Transverse colon (tissue), 4 donors: ENCODE measurements at regions of chr5 and their contacts with region 1.

Region 1: DNA sequence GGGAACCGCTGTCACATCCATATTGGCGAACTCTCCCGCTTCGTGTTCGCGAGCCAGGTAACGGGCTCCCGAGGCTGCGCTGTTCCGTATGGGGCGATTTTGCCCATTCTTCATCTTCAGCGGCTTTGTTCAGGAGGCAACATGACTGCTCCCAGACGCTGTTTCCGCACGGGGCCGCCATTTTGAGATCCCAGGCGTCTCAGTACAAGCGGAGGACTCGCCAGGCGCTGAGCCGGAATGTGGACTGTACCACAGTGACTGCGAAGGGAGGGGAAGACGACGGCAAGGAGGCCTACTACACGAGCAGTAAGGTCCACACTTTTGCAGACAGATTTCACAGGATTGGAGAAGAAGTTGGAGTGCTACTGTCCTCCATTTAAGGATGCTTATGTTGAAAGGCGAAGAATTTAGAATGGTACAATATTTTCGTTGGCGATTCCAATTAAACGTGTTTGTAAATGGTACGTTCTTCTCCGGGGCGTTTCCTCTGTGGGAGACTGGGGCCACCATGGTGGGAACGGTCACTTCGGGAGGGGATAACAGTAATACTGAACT is 41.6 kb upstream of the ZNF300 start:
- DNase-seq: peak; percentile 53
- H3K4me3 ChIP-seq: peak overlapping the region; percentile 35 to 50 (median 41)
- H3K27ac ChIP-seq: peak overlapping the region; percentile 66 to 83 (median 78)
- H3K4me1 ChIP-seq: no peaks in the 10 kb centered on the region
- H3K27me3 ChIP-seq: no peaks in the 10 kb centered on the region
- CTCF ChIP-seq: no peak
- EP300 ChIP-seq: no peak
- POLR2A ChIP-seq: no peak

Region 2: DNA sequence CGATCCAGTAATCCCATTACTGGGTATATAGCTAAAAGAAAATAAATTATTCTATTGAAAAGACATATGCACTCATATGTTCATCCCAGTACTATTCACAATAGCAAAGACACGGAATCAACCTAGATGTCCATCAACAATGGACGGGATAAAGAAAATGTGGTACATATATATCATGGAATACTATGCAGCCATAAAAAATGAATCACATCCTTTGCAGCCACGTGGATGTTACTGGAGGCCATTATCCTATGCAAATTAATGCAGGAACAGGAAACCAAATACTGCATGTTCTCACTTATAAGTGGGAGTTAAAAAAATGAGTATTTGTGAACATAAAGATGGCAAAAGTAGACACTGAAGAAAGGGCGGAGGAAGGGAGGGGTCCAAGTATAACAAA is 116.7 kb before region 1 on chr5:
- in situ Hi-C with region 1: no loop called
- intact Hi-C with region 1: no loop called
- DNase-seq: no peak
- H3K4me3 ChIP-seq: no peak overlapping the region
- H3K27ac ChIP-seq: no peak overlapping the region
- H3K4me1 ChIP-seq: no peaks in the 10 kb centered on the region
- H3K27me3 ChIP-seq: no peaks in the 10 kb centered on the region
- CTCF ChIP-seq: no peak
- EP300 ChIP-seq: no peak
- POLR2A ChIP-seq: no peak

Region 3: DNA sequence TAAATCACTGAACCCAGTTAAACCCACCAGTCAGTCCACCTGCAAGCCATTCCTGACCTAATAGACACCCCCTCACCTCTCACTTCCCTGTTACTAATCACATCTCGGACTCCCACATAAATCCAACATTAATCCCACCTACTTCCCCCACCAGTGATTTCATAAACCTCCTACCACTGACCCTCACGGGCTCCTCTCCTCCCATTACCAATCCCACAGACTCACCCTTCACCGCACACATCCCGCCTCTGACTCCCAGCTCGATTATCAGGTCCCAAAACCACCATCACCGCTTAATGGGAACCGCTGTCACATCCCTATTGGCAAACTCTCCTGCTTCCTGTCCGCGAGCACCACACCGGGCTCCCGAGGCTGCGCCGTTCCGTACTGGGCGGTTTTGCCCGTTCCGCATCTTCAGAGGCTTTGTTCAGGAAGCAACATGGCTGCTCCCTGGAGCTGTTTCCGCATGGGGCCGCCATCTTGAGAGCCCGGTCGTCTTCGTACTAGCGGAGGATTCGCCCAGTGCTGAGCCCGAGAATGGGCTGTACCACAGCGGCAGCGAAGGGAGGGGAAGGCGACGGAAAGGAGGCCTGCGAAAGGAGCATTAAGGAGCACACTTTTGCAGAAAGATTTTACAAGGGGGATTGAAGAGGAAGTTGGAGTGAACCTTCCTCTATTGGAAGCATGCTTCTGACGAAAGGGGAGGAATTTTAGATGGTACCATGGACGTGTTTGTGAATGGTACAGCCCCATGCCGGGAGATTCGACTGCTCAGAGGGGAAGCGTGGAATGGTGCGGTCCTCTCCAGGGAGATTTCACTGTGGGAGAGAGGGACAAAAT is 41.7 kb before region 1 on chr5 and contains the start of gene ZNF300:
- in situ Hi-C with region 1: no loop called
- intact Hi-C with region 1: loop called (anchors 1 kb)
- DNase-seq: peak; percentile 79
- H3K4me3 ChIP-seq: peak within 1 kb of the TSS; percentile 31 to 52 (median 40)
- H3K27ac ChIP-seq: peak within 1 kb of the TSS; percentile 11 to 68 (median 58)
- H3K4me1 ChIP-seq: peaks cover 0 to 5% (median 0%) of the 10 kb centered on the region in 4 donors
- H3K27me3 ChIP-seq: no peaks in the 10 kb centered on the region
- CTCF ChIP-seq: no peak
- EP300 ChIP-seq: no peak
- POLR2A ChIP-seq: peak; percentile 16
- total RNA-seq, gene ZNF300: 1.4 to 4.8 (median 3.2) TPM

Region 4: GRCh38 chr5:150912312-150912814 is 34.1 kb before region 1 on chr5:
- in situ Hi-C with region 1: no loop called
- intact Hi-C with region 1: loop called (anchors 5 kb)
- DNase-seq: no peak
- H3K4me3 ChIP-seq: no peak overlapping the region
- H3K27ac ChIP-seq: no peak overlapping the region
- H3K4me1 ChIP-seq: no peaks in the 10 kb centered on the region
- H3K27me3 ChIP-seq: no peaks in the 10 kb centered on the region
- CTCF ChIP-seq: no peak
- EP300 ChIP-seq: no peak
- POLR2A ChIP-seq: no peak

Region 5: GRCh38 chr5:150989695-150990094 is 43.3 kb after region 1 on chr5:
- in situ Hi-C with region 1: no loop called
- intact Hi-C with region 1: no loop called
- DNase-seq: no peak
- H3K4me3 ChIP-seq: no peak overlapping the region
- H3K27ac ChIP-seq: no peak overlapping the region
- H3K4me1 ChIP-seq: no peaks in the 10 kb centered on the region
- H3K27me3 ChIP-seq: no peaks in the 10 kb centered on the region
- CTCF ChIP-seq: no peak
- EP300 ChIP-seq: no peak
- POLR2A ChIP-seq: no peak